Transverse colon (tissue), 4 donors: ENCODE measurements at regions of chr9 and their contacts with region 1.

Region 1: DNA sequence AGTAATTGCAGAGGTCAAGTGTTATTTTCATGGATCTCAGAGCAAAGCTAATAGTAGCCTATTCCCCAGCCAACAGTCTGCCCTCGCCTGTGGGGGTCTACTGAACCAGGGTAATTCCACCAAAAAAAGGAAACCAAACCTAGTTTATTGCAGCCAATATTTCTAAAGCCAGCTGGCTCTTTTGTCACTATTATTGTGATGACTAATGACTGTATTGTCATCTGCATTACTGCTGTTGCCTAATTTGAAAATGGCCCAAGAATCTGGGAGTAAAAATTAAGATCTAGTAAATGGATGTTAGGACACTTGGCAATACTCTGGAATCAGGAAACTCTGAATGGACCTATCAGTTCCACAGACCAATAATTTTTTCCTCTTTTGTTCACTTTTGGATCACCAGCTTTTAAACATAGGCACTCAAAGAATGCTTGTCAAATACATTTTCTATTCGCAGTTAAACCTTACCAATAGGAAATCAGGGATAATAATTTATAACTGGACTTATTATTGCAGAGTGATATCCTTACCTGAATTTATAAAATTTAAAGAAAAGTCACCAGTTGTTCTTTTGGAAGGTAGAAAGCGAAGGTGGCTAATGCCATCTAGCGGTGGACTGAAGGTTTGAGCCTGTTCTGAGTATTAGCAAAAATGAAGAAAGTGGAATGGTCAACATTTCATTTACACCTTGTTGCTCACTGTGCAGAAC is 69.2 kb downstream of the SYK start:
- DNase-seq: peak; percentile 37
- H3K4me3 ChIP-seq: no peak overlapping the region
- H3K27ac ChIP-seq: no peak overlapping the region
- H3K4me1 ChIP-seq: no peaks in the 10 kb centered on the region
- H3K27me3 ChIP-seq: no peaks in the 10 kb centered on the region
- CTCF ChIP-seq: peak; percentile 68 to 86 (median 81)
- EP300 ChIP-seq: no peak
- POLR2A ChIP-seq: no peak

Region 2: DNA sequence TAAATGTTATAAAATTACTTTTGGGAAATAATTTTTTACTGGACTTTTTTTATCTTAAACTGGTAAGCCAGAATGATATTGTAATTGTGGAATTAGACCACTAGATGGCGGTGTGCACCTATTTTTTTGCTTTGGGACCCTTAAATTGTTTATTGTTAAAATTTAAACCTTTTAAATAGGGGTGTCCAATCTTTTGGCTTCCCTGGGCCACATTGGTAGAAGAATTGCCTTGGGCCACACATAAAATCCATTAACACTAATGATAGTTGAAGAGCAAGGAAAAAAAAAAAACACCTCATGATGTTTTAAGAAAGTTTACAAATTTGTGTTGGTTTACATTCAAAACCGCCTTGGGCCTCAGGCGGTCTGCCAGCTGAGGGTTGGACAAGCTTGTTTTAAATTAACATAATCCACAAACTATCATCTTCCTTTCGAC is 1294.4 kb before region 1 on chr9:
- in situ Hi-C with region 1: loop called in 3 of 4 experiments (anchors 25 kb)
- intact Hi-C with region 1: loop called (anchors 10 kb)
- DNase-seq: no peak
- H3K4me3 ChIP-seq: no peak overlapping the region
- H3K27ac ChIP-seq: no peak overlapping the region
- H3K4me1 ChIP-seq: no peaks in the 10 kb centered on the region
- H3K27me3 ChIP-seq: peaks cover 20% of the 10 kb centered on the region
- CTCF ChIP-seq: peak; percentile 64 to 86 (median 75)
- EP300 ChIP-seq: no peak
- POLR2A ChIP-seq: no peak

Region 3: GRCh38 chr9:89597711-89598625 is 1272.8 kb before region 1 on chr9:
- in situ Hi-C with region 1: loop called (anchors 10 to 25 kb)
- intact Hi-C with region 1: no loop called
- DNase-seq: peak; percentile 66
- H3K4me3 ChIP-seq: no peak overlapping the region
- H3K27ac ChIP-seq: no peak overlapping the region
- H3K4me1 ChIP-seq: peaks cover 0 to 6% (median 2%) of the 10 kb centered on the region in 4 donors
- H3K27me3 ChIP-seq: no peaks in the 10 kb centered on the region
- CTCF ChIP-seq: peak; percentile 73 to 84 (median 79)
- EP300 ChIP-seq: no peak
- POLR2A ChIP-seq: no peak

Region 4: DNA sequence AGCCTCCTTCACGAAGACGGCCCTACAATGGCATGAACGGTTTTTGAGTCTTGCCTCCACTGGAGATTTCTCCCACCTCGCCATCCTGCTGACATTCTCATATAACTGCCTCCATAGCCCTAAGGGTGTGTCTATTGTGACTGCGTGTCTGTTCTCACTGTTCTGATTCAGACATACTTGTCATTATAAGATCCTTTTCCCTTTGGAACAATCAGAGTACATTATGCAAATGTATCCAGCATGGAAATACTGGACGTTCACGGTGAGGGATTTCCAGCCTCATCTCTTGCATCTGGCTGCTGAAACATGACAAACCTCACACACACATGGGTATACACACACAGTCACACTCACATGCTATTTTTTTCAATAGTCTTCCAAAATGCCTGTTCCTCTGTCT is 630.2 kb before region 1 on chr9:
- in situ Hi-C with region 1: loop called in 1 of 4 experiments (anchors 25 kb)
- intact Hi-C with region 1: no loop called
- DNase-seq: no peak
- H3K4me3 ChIP-seq: no peak overlapping the region
- H3K27ac ChIP-seq: no peak overlapping the region
- H3K4me1 ChIP-seq: no peaks in the 10 kb centered on the region
- H3K27me3 ChIP-seq: no peaks in the 10 kb centered on the region
- CTCF ChIP-seq: no peak
- EP300 ChIP-seq: no peak
- POLR2A ChIP-seq: no peak

Region 5: DNA sequence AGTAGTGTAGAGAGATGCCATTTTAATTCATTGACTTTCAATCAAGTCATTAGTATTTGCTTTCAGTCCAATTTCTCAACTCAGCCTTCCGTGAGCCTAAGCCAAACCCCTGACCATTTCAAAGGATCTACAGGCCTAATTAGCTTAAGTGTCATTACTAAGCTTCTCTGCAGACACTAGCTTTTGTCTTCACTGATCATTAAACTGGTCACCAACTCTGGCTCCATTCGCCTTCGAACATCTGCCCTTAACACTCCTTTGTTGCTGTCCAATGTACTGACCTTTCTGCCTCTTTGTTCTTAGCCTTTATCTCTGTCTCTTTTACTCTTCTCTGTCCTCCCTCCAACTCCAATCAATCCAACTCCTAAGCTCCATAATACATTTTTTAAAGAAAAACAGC is 527.4 kb before region 1 on chr9:
- in situ Hi-C with region 1: no loop called
- intact Hi-C with region 1: no loop called
- DNase-seq: no peak
- H3K4me3 ChIP-seq: no peak overlapping the region
- H3K27ac ChIP-seq: no peak overlapping the region
- H3K4me1 ChIP-seq: no peaks in the 10 kb centered on the region
- H3K27me3 ChIP-seq: no peaks in the 10 kb centered on the region
- CTCF ChIP-seq: no peak
- EP300 ChIP-seq: no peak
- POLR2A ChIP-seq: no peak

Region 6: GRCh38 chr9:90773617-90774016 is 97.2 kb before region 1 on chr9:
- in situ Hi-C with region 1: loop called in 1 of 4 experiments (anchors 25 kb)
- intact Hi-C with region 1: no loop called
- DNase-seq: peak; percentile 26
- H3K4me3 ChIP-seq: no peak overlapping the region
- H3K27ac ChIP-seq: no peak overlapping the region
- H3K4me1 ChIP-seq: no peaks in the 10 kb centered on the region
- H3K27me3 ChIP-seq: no peaks in the 10 kb centered on the region
- CTCF ChIP-seq: peak; percentile 7 to 31 (median 29)
- EP300 ChIP-seq: no peak
- POLR2A ChIP-seq: no peak

Region 7: DNA sequence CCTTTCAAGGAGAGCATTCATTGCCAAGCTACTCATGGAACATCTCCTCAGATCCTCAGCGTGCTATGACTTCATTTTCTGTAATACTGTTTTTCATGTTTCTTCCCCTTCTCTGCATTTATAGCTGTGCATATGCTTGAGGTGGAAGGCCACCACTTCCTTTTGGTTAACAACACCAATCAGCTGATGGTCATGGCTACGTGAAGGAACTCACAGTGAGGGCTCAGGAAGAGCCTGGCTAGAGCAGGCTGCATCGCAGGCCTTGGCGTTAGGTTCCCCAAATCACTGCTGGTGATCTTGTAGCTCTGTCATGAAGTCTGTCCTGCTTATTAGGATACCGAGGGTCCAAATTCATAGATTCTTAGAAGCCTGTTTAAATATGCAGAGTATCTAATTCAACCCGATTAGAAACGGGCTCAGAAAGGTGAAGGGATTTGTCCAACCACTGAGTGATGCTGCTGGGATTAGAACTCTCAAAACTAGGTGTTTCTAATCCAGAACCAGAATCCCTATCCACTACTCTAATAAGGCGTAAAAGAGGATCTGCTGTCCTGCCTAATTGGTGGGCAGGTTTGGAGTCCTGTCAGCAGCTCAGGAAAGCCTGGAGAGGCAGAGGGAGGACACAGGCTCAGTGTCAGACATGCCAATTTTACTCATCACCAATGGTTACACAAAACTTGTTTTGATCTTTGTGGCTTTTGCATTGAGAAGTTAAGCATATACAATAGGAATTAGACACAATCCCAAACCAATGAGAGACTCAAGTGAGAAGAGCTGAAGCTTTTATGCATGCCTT is 61.7 kb before region 1 on chr9:
- in situ Hi-C with region 1: no loop called
- intact Hi-C with region 1: no loop called
- DNase-seq: no peak
- H3K4me3 ChIP-seq: no peak overlapping the region
- H3K27ac ChIP-seq: peak overlapping the region in 2 of 4 donors; percentile 30 to 37
- H3K4me1 ChIP-seq: peaks cover 0 to 38% (median under 1%) of the 10 kb centered on the region in 4 donors
- H3K27me3 ChIP-seq: no peaks in the 10 kb centered on the region
- CTCF ChIP-seq: no peak
- EP300 ChIP-seq: no peak
- POLR2A ChIP-seq: no peak